Sigmoid colon (tissue), 7 donors: ENCODE measurements at regions of chr1 and their contacts with region 1.

Region 1: GRCh38 chr1:26169669-26170471 is at the start of gene ZNF593:
- DNase-seq: peak; percentile 97
- H3K4me3 ChIP-seq: peak within 1 kb of the TSS; percentile 84 to 93 (median 86)
- H3K27ac ChIP-seq: peak within 1 kb of the TSS; percentile 78 to 85 (median 82)
- H3K4me1 ChIP-seq: peaks cover 0 to 21% (median 14%) of the 10 kb centered on the region in 4 donors
- H3K27me3 ChIP-seq: no peaks in the 10 kb centered on the region
- CTCF ChIP-seq: peak; percentile 88 to 91 (median 90)
- EP300 ChIP-seq: no peak
- POLR2A ChIP-seq: no peak
- total RNA-seq, gene ZNF593: 16.3 to 37.2 (median 32.1) TPM

Region 2: DNA sequence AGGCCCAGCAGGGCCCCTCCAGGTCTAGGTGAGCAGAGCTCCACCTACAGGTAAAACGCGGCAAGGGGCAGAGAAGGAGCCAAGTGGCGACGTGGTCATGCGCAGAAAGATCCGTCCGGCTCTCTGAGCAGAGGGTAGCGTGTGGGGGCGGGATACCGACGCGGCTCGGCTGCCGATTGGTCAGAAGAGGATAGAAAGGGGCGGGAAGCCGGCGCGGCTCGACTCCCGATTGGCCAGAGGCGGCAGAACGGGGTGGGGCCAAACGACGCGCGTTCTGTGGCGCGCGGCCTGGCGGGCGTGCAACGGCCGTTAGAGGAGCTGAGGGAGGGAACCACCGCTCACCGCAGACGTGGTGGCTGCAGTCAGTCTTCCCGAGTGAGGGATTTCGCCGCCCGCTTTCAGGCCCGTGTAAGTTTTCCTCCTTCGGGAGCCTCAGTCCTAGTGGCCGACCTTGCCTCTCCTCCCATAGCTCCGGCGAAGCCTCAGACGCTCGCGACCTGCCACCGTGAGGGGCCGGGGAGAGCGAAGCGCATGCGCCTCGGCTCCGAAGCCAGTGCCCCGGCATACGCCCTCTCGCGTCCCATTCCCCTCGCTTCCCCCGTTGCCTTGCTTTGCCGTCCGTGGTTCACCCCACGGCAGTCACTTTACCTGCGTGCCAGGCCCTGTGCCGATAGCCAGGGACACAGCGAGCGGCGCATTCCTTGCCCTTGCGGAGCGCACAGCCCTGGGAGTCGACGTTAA is 64.2 kb after region 1 on chr1 and contains the start of gene CEP85:
- intact Hi-C with region 1: loop called (anchors 2 kb)
- DNase-seq: peak; percentile 99
- H3K4me3 ChIP-seq: peak within 1 kb of the TSS; percentile 58 to 67 (median 60)
- H3K27ac ChIP-seq: peak within 1 kb of the TSS; percentile 89 to 94 (median 90)
- H3K4me1 ChIP-seq: peaks cover 0 to 13% (median 8%) of the 10 kb centered on the region in 4 donors
- H3K27me3 ChIP-seq: peaks cover 0 to 3% (median 0%) of the 10 kb centered on the region in 3 donors
- CTCF ChIP-seq: peak in 3 of 4 experiments; percentile 33 to 79 (median 66)
- EP300 ChIP-seq: no peak
- POLR2A ChIP-seq: peak; percentile 54 to 80
- total RNA-seq, gene CEP85: 1.9 to 5.4 (median 3.3) TPM

Region 3: GRCh38 chr1:26321315-26322041 is 151.6 kb after region 1 on chr1:
- intact Hi-C with region 1: loop called (anchors 10 kb)
- DNase-seq: peak; percentile 96
- H3K4me3 ChIP-seq: no peak overlapping the region
- H3K27ac ChIP-seq: no peak overlapping the region
- H3K4me1 ChIP-seq: peaks cover 0 to 6% (median 5%) of the 10 kb centered on the region in 4 donors
- H3K27me3 ChIP-seq: no peaks in the 10 kb centered on the region
- CTCF ChIP-seq: peak; percentile 83 to 93 (median 86)
- EP300 ChIP-seq: no peak
- POLR2A ChIP-seq: no peak